ENCODE measurements at regions of chr15 and their contacts with region 1.

Region 1: GRCh38 chr15:89057504-89058133 is 30.6 kb upstream of the ABHD2 start:
- DNase-seq: peak; percentile 84
- H3K4me3 Mint-ChIP-seq: no peak overlapping the region
- H3K27ac Mint-ChIP-seq: no peak overlapping the region
- H3K4me1 Mint-ChIP-seq: peaks cover 8% of the 10 kb centered on the region
- H3K27me3 Mint-ChIP-seq: peaks cover 3% of the 10 kb centered on the region

Region 2: GRCh38 chr15:88932271-88932874 is 125.2 kb before region 1 on chr15:
- CTCF ChIA-PET with region 1: no interaction called
- POLR2A ChIA-PET with region 1: no interaction called
- DNase-seq: no peak
- H3K4me3 Mint-ChIP-seq: no peak overlapping the region
- H3K27ac Mint-ChIP-seq: no peak overlapping the region
- H3K4me1 Mint-ChIP-seq: no peaks in the 10 kb centered on the region
- H3K27me3 Mint-ChIP-seq: peaks cover 31% of the 10 kb centered on the region

Region 3: DNA sequence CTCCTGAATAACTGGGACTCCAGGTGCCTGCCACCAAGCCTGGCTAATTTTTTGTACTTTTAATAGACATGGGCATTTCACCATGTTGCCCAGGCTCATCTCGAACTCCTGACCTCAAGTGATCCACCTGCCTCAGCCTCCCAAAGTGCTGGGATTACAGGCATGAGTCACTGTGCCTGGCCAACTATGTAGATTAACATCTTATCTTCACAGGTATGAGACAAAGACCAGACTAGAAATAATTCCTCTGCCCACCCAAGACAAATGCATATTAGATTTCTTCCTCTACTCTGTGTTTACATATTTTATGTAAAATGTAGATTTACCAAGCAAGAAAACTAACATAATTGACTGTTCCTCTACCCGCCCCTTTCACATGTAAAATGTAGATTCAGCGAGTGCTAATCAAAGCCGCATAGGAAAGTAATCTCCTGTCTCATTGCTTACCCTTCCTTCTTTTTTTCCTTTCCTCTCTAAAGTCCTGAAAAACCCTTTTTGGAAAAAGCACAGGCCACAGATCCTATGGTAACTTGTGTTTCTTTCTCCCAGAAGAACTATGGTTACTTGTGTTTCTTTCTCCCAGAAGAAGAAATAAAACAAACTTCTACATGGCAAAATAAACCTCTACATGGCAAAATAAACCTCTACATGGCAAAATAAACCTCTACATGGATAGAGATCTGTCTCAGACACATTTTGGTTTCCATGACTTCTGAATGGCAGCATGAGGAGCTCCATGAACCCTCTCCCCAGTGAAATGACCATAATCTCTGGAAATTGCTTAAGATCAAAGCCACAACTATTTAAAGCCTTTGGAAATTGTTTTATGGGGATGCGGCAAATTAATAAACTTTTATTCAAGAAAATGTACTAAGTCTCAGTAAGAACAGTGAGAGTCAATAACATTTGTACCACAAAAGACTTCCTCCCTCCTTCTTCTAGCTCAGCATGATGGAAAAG is 21.5 kb after region 1 on chr15:
- CTCF ChIA-PET with region 1: interaction called, 11 read pairs
- POLR2A ChIA-PET with region 1: no interaction called
- DNase-seq: no peak
- H3K4me3 Mint-ChIP-seq: no peak overlapping the region
- H3K27ac Mint-ChIP-seq: no peak overlapping the region
- H3K4me1 Mint-ChIP-seq: peaks cover 5% of the 10 kb centered on the region
- H3K27me3 Mint-ChIP-seq: peaks cover 18% of the 10 kb centered on the region

Region 4: GRCh38 chr15:89129123-89129815 is 71.7 kb after region 1 on chr15:
- CTCF ChIA-PET with region 1: interaction called, 43 read pairs
- POLR2A ChIA-PET with region 1: no interaction called
- DNase-seq: peak; percentile 56
- H3K4me3 Mint-ChIP-seq: no peak overlapping the region
- H3K27ac Mint-ChIP-seq: no peak overlapping the region
- H3K4me1 Mint-ChIP-seq: peaks cover 37% of the 10 kb centered on the region
- H3K27me3 Mint-ChIP-seq: no peaks in the 10 kb centered on the region

Region 5: GRCh38 chr15:89171136-89172072 is 113.8 kb after region 1 on chr15:
- CTCF ChIA-PET with region 1: interaction called, 113 read pairs
- POLR2A ChIA-PET with region 1: interaction called, 3 read pairs
- DNase-seq: peak; percentile 39
- H3K4me3 Mint-ChIP-seq: no peak overlapping the region
- H3K27ac Mint-ChIP-seq: no peak overlapping the region
- H3K4me1 Mint-ChIP-seq: peaks cover 13% of the 10 kb centered on the region
- H3K27me3 Mint-ChIP-seq: no peaks in the 10 kb centered on the region

Region 6: DNA sequence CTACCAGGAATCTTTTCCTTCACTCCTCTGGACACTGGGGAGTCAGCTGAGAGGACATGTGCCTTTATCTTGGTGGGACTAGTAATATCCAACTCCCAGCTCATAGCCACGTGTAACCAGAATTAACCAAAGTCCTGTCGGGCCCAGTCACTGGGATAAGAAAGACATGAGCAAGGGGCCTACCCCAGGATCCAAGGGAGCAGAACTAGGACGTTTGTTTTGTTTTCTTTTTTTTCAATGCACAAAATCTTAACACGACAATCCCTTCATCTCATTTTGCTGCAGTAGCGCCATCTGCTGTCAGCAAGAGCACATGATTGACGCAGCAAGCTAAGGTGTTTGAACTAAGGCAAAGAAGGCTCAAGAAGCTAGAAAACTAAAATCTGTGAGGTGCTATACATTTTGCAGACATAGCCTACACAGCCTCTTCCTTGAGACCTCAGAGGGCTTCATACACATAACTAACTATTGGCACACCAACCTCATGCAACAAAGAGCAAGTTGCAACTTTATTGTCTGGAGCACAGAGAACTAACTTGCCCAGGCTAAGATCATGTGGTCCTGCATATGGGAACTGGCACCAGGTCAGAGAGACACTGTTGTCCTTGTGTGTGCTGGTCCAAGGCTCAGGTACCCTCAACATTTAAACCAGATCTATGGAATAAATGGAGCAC is 120.2 kb after region 1 on chr15:
- CTCF ChIA-PET with region 1: interaction called, 113 read pairs
- POLR2A ChIA-PET with region 1: interaction called, 10 read pairs
- DNase-seq: peak; percentile 72
- H3K4me3 Mint-ChIP-seq: no peak overlapping the region
- H3K27ac Mint-ChIP-seq: no peak overlapping the region
- H3K4me1 Mint-ChIP-seq: peaks cover 17% of the 10 kb centered on the region
- H3K27me3 Mint-ChIP-seq: no peaks in the 10 kb centered on the region

Measured in activated CD4-positive, alpha-beta memory T cell treated with anti-CD3 and anti-CD28 coated beads, Interleukin-2, amount 10 ng/mL, durations not matched to agents 7 days and 5 days (primary cell).